K562 (cell line): ENCODE measurements at regions of chr9 and their contacts with region 1.

Region 1: DNA sequence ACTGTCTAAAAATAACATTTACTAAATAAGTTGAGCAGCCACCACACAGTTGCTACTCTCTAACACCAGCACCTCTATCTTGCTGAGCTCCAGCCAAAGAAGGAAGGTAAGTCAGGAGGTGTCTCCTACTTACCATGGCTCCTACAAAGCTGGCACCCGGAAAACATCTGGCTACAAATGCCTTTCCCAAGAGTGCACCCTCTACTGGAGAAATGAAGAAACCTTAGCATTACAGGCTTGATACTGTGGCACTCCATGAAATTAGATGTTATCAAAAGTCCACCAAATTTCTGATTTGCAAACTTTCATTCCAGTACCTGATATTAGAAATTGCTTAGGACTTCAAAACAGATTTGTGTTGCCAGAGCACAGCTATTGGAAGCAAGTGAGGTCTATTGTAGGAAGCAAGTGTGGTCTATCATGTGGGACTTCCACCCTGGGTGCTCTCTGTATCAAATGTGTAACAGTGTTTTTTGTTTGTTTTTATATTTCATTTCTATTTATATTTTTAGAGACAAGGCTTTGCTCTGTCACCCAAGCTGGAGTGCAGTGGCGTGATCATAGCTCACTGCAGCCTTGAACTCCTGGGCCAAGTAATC is 25.7 kb upstream of the RFK start:
- DNase-seq: peak; percentile 16 to 29 (median 19)
- ATAC-seq: peak; percentile 73
- H3K4me3 ChIP-seq: no peak overlapping the region
- H3K27ac ChIP-seq: no peak overlapping the region
- H3K4me1 ChIP-seq: no peaks in the 10 kb centered on the region
- H3K27me3 ChIP-seq: no peaks in the 10 kb centered on the region
- CTCF ChIP-seq: peak; percentile 35 to 53 (median 47); a peak in 5 of 6 replicates
- EP300 ChIP-seq: no peak
- POLR2A ChIP-seq: no peak
- RAD21 ChIP-seq: peak in 1 of 2 experiments; percentile 39; a peak in 3 of 4 replicates

Region 2: DNA sequence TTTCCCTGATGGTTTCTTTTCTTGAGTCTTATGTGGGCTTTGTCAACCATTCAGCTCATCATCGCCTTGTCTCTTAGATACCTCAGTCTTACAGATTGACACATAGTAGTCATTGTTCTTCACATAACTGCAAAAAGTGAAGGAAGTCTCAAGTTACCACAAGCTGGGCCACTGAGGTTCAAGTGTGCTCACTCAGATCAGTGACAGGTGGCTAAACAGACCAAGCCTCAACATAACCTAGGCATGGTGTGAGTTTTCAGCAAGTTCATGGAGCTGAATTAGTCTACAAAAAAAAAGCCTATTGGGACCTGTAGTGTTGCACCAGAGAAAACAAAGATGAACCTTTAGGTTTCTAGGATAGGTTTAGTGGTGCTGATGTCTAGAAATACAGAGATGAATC is 83.9 kb before region 1 on chr9:
- CTCF ChIA-PET with region 1: no interaction called
- POLR2A ChIA-PET with region 1: no interaction called
- in situ Hi-C with region 1: no loop called
- intact Hi-C with region 1: no loop called
- DNase-seq: no peak
- ATAC-seq: no peak
- H3K4me3 ChIP-seq: no peak overlapping the region
- H3K27ac ChIP-seq: no peak overlapping the region
- H3K4me1 ChIP-seq: no peaks in the 10 kb centered on the region; a peak in 1 of 5 replicates
- H3K27me3 ChIP-seq: peaks cover 0 to 11% of the 10 kb centered on the region in 2 experiments; a peak in 2 of 5 replicates
- CTCF ChIP-seq: no peak
- EP300 ChIP-seq: no peak
- POLR2A ChIP-seq: no peak
- RAD21 ChIP-seq: no peak

Region 3: DNA sequence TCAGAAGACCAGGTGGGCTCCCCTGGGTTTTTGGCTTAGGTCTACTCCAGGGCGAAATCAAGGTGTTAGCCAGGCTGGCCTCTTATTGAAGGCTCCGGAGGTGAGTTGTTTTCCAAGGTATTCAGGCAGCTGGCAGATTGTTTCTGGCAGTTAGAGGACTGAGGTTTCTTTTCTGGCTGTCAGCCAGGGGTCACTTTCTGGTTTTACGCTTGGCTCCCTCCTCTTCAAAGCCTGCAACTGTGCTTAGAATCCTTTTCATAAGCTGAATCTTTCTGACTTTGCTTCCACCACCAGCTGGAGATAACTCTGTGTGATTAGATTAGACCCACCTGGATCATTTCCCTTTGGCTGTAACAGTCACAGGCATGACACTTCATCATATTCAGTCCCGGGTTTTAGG is 50.3 kb before region 1 on chr9:
- CTCF ChIA-PET with region 1: no interaction called
- POLR2A ChIA-PET with region 1: no interaction called
- in situ Hi-C with region 1: no loop called
- intact Hi-C with region 1: loop called (anchors 10 kb)
- DNase-seq: peak in 1 of 4 experiments; percentile 37
- ATAC-seq: no peak; the same call in 2 of the 3 replicates
- H3K4me3 ChIP-seq: no peak overlapping the region
- H3K27ac ChIP-seq: no peak overlapping the region
- H3K4me1 ChIP-seq: no peaks in the 10 kb centered on the region; a peak in 3 of 5 replicates
- H3K27me3 ChIP-seq: no peaks in the 10 kb centered on the region
- CTCF ChIP-seq: no peak
- EP300 ChIP-seq: no peak
- POLR2A ChIP-seq: no peak
- RAD21 ChIP-seq: no peak